Heart right ventricle (tissue), 16 donors: ENCODE measurements at regions of chr18 and their contacts with region 1.

Region 1: DNA sequence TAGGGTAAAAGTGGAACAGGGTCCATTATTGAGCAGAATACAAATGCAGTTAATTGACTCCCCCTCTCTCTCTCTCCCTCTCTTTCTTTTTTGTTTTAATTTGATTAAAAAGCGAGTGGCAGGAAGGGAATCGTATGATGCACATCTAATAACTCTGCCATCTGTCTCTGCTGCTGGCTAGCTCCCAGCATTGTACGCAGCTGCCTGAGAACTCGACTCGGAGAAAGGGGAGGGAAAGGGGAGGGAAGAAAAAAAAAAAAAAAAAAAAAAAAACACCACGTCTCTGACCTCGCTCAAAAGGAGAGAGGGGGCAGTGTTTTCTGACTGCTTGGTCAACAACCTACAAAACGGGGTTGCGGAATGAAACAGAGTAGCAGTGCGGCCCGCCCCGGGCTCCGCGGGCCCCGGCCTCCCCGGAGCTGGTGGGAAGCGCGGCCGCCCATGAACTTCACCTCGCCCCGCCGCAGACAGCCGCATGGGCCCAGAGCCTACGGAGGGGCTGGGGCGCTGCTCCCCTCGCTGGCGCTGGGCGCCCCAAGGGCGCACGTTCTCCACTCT is 265.7 kb downstream of the TCF4 start:
- DNase-seq: peak; percentile 84 to 91
- ATAC-seq: peak; percentile 80 to 94 (median 88)
- H3K4me3 ChIP-seq: peak overlapping the region; percentile 29 to 79 (median 64)
- H3K27ac ChIP-seq: peak overlapping the region; percentile 87 to 98 (median 94)
- H3K4me1 ChIP-seq: peaks cover 2 to 52% (median 37%) of the 10 kb centered on the region in 9 donors
- H3K27me3 ChIP-seq: no peaks in the 10 kb centered on the region
- CTCF ChIP-seq: peak in 6 of 9 donors; percentile 13 to 52 (median 34)

Region 2: GRCh38 chr18:55096261-55096951 is 225.9 kb before region 1 on chr18:
- intact Hi-C with region 1: loop called in 1 of 10 experiments (anchors 10 kb)
- DNase-seq: peak in 1 of 2 donors; percentile 16
- ATAC-seq: peak in 7 of 8 donors; percentile 38 to 89 (median 86)
- H3K4me3 ChIP-seq: no peak overlapping the region
- H3K27ac ChIP-seq: peak overlapping the region in 1 of 10 donors; percentile 30
- H3K4me1 ChIP-seq: peaks cover 0 to 17% (median 8%) of the 10 kb centered on the region in 9 donors
- H3K27me3 ChIP-seq: no peaks in the 10 kb centered on the region
- CTCF ChIP-seq: peak in 8 of 9 donors; percentile 11 to 62 (median 42)

Region 3: DNA sequence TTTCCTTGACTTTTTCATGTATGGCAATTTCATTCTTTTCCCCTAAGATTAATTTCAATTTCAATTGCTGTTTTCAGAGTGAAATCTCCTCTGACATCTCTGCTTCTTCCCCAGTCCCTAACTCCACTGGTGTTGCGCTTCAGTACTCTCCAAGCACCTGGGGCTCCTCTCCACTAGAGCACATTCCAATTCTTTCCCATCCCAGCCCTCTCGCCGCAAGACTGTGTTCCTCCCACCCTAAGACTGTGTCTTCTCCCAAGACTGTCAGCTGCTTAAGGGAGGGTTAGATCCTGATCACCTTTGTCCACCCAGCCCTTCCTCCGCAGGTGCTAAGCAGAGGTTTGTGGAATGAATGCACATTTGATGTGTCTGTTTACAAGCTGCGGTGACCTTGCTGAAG is 107.3 kb before region 1 on chr18:
- intact Hi-C with region 1: no loop called
- DNase-seq: no peak
- ATAC-seq: no peak
- H3K4me3 ChIP-seq: no peak overlapping the region
- H3K27ac ChIP-seq: no peak overlapping the region
- H3K4me1 ChIP-seq: peaks cover 0 to 10% (median 3%) of the 10 kb centered on the region in 9 donors
- H3K27me3 ChIP-seq: no peaks in the 10 kb centered on the region
- CTCF ChIP-seq: no peak

Region 4: GRCh38 chr18:55234366-55235093 is 87.7 kb before region 1 on chr18:
- intact Hi-C with region 1: loop called in 2 of 10 experiments (anchors 5 to 10 kb)
- DNase-seq: peak; percentile 60 to 85
- ATAC-seq: peak; percentile 59 to 92 (median 86)
- H3K4me3 ChIP-seq: peak overlapping the region in 1 of 10 donors; percentile 3
- H3K27ac ChIP-seq: peak overlapping the region; percentile 39 to 89 (median 62)
- H3K4me1 ChIP-seq: peaks cover 3 to 63% (median 42%) of the 10 kb centered on the region in 9 donors
- H3K27me3 ChIP-seq: no peaks in the 10 kb centered on the region
- CTCF ChIP-seq: peak; percentile 59 to 84 (median 76)

Region 5: GRCh38 chr18:55251254-55251971 is 70.8 kb before region 1 on chr18:
- intact Hi-C with region 1: loop called in 1 of 10 experiments (anchors 10 kb)
- DNase-seq: no peak
- ATAC-seq: peak in 6 of 8 donors; percentile 63 to 81 (median 74)
- H3K4me3 ChIP-seq: peak overlapping the region in 1 of 10 donors; percentile 4
- H3K27ac ChIP-seq: peak overlapping the region; percentile 22 to 89 (median 66)
- H3K4me1 ChIP-seq: peaks cover 3 to 79% (median 56%) of the 10 kb centered on the region in 9 donors
- H3K27me3 ChIP-seq: no peaks in the 10 kb centered on the region
- CTCF ChIP-seq: no peak

Region 6: GRCh38 chr18:55405893-55406406 is 83.7 kb after region 1 on chr18:
- intact Hi-C with region 1: loop called in 5 of 10 experiments (anchors 5 kb)
- DNase-seq: peak; percentile 82 to 95
- ATAC-seq: peak; percentile 80 to 92 (median 88)
- H3K4me3 ChIP-seq: no peak overlapping the region
- H3K27ac ChIP-seq: peak overlapping the region; percentile 24 to 86 (median 82)
- H3K4me1 ChIP-seq: peaks cover 0 to 58% (median 38%) of the 10 kb centered on the region in 9 donors
- H3K27me3 ChIP-seq: no peaks in the 10 kb centered on the region
- CTCF ChIP-seq: peak in 5 of 9 donors; percentile 10 to 39 (median 24)

Region 7: DNA sequence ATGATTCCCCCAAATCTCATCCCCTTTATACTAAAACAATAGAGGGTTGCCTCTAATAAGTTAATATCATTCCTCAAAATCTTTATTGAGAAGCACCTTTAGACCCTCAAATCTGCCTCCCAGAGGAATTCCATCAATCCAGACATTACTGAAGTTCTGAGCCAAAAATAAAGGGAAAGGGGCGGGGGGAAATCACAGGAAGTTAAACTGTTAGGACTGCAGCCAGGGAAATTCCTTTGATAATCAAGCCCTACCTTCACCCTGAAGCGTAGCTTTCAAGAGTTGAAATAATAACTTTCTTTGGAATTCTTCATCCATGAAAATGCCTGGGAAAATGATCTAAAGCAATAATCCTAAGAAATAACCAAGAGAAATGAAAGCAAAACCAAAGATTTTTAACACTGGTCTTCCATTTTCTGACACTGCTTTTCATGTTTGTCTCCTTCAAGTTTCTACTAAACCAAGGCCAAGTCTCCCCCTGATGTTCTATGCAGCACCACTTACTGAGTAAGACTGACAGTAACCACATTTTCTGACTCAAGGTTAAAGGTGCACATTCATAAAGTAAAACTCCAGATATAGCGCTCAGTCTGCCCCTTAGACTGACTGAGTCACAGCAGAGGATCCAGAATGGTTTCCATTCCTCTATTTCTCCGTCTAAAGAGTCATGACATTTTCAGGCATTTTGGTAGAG is 187.5 kb after region 1 on chr18:
- intact Hi-C with region 1: loop called in 1 of 10 experiments (anchors 10 kb)
- DNase-seq: peak in 1 of 2 donors; percentile 76
- ATAC-seq: peak in 6 of 8 donors; percentile 25 to 79 (median 59)
- H3K4me3 ChIP-seq: peak overlapping the region in 8 of 10 donors; percentile 15 to 44 (median 38)
- H3K27ac ChIP-seq: peak overlapping the region; percentile 69 to 95 (median 88)
- H3K4me1 ChIP-seq: peaks cover 0 to 73% (median 46%) of the 10 kb centered on the region in 9 donors
- H3K27me3 ChIP-seq: no peaks in the 10 kb centered on the region
- CTCF ChIP-seq: no peak